Endothelial cell of umbilical vein (primary cell): ENCODE measurements at regions of chr12 and their contacts with region 1.

Region 1: DNA sequence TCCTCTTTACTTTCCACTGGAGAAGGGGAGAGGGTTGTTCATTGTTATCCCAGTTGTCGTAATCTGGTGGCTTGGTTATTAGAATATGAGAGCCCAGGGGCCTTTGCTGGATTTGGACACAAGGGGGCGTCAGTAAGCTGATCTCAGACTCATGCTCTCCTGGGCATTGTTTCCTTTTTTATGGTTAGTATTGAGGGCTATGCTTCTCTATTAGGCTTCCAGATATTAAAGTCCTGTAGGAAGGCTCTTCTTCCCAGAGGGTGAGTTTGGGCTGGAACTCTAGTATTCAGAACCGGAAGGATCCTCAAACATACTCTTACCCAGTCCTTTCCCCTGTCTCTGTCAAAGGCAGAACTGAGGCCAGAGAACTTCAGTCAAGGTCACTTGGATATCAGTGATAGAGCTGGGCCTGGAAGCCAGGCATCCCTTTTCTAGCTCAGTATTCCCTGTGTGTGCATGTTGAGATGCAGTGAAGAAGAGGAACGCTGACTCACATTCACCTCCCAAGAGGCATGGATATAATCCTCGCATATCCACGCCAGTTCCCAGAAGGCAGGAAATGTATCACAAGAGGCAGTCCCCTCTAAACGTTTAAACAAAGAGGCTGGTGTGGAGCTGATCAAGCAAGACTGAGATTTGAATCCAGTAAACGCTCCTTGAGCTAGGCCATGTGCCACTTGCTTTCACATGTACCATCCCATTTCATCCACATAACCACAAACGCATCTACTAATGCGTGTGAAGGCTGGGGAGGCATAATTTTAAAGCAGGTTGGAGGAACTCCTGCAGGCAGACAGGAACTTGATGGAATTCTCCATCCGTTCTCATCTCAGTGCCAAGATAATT is 41.6 kb downstream of the UBE3B start:
- DNase-seq: peak; percentile 84
- H3K4me3 ChIP-seq: peak overlapping the region in 1 of 3 experiments; percentile 20
- H3K27ac ChIP-seq: peak overlapping the region; percentile 98
- H3K4me1 ChIP-seq: peaks cover 27% of the 10 kb centered on the region
- H3K27me3 ChIP-seq: no peaks in the 10 kb centered on the region
- CTCF ChIP-seq: peak; percentile 84 to 86
- POLR2A ChIP-seq: no peak

Region 2: DNA sequence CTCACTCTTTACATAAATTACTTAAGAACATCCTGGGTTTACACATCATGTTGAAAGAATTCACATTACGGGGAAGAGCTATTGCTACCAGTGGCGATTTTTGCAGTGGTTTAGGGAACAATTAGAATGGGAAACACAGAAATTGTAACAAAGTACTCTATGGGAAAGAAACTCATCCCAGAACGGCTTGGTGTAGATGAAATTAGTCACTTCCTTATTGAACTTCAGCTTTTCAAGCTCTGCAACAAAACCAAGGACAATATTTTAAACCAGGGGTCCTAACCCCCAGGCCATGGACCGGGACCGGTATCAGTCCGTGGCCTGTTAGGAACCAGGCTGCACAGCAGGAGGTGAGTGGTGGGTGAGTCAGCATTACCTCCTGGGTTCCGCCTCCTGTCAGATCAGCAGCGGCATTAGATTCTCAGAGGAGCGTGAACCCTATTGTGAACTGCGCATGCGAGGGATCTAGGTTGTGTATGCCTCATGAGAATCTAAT is 1036.3 kb before region 1 on chr12:
- CTCF ChIA-PET with region 1: no interaction called
- POLR2A ChIA-PET with region 1: no interaction called
- dilution Hi-C with region 1: no loop called
- intact Hi-C with region 1: no loop called
- DNase-seq: no peak
- H3K4me3 ChIP-seq: no peak overlapping the region
- H3K27ac ChIP-seq: no peak overlapping the region
- H3K4me1 ChIP-seq: no peaks in the 10 kb centered on the region
- H3K27me3 ChIP-seq: no peaks in the 10 kb centered on the region
- CTCF ChIP-seq: no peak
- POLR2A ChIP-seq: no peak

Region 3: GRCh38 chr12:109462710-109463692 is 56.0 kb before region 1 on chr12:
- CTCF ChIA-PET with region 1: interaction called, 6 read pairs
- POLR2A ChIA-PET with region 1: no interaction called
- dilution Hi-C with region 1: no loop called
- intact Hi-C with region 1: loop called (anchors 2 kb)
- DNase-seq: peak; percentile 92
- H3K4me3 ChIP-seq: no peak overlapping the region
- H3K27ac ChIP-seq: peak overlapping the region; percentile 89
- H3K4me1 ChIP-seq: peaks cover 71% of the 10 kb centered on the region
- H3K27me3 ChIP-seq: no peaks in the 10 kb centered on the region
- CTCF ChIP-seq: no peak
- POLR2A ChIP-seq: peak; percentile 23

Region 4: DNA sequence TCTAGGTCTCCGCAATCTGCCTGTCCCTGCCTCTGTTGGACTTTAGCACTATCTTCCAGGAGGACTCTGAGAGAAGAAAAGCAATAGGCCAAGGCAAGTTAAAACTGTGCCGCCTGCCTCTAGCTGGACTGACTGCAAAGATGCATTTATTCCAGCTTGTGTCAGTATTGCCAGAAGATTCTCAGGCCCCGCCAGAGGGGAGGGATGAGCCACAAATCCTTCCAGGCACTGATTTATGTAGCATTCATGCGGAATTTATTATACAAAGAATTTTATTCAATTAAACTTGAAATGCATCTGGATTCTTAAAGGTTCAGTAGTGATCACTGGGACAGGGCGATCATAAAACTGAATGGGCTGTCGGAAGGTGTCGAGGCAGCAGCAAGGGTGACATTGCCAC is 34.4 kb after region 1 on chr12:
- CTCF ChIA-PET with region 1: interaction called, 17 read pairs
- POLR2A ChIA-PET with region 1: no interaction called
- dilution Hi-C with region 1: no loop called
- intact Hi-C with region 1: no loop called
- DNase-seq: no peak
- H3K4me3 ChIP-seq: no peak overlapping the region
- H3K27ac ChIP-seq: no peak overlapping the region
- H3K4me1 ChIP-seq: no peaks in the 10 kb centered on the region
- H3K27me3 ChIP-seq: peaks cover 0 to 2% of the 10 kb centered on the region in 2 experiments
- CTCF ChIP-seq: no peak
- POLR2A ChIP-seq: no peak

Region 5: GRCh38 chr12:109597795-109598427 is 78.9 kb after region 1 on chr12:
- CTCF ChIA-PET with region 1: interaction called, 33 read pairs
- POLR2A ChIA-PET with region 1: no interaction called
- dilution Hi-C with region 1: no loop called
- intact Hi-C with region 1: loop called (anchors 1 kb)
- DNase-seq: peak; percentile 78
- H3K4me3 ChIP-seq: no peak overlapping the region
- H3K27ac ChIP-seq: no peak overlapping the region
- H3K4me1 ChIP-seq: peaks cover 3% of the 10 kb centered on the region
- H3K27me3 ChIP-seq: no peaks in the 10 kb centered on the region
- CTCF ChIP-seq: peak; percentile 95 to 100
- POLR2A ChIP-seq: no peak

Region 6: DNA sequence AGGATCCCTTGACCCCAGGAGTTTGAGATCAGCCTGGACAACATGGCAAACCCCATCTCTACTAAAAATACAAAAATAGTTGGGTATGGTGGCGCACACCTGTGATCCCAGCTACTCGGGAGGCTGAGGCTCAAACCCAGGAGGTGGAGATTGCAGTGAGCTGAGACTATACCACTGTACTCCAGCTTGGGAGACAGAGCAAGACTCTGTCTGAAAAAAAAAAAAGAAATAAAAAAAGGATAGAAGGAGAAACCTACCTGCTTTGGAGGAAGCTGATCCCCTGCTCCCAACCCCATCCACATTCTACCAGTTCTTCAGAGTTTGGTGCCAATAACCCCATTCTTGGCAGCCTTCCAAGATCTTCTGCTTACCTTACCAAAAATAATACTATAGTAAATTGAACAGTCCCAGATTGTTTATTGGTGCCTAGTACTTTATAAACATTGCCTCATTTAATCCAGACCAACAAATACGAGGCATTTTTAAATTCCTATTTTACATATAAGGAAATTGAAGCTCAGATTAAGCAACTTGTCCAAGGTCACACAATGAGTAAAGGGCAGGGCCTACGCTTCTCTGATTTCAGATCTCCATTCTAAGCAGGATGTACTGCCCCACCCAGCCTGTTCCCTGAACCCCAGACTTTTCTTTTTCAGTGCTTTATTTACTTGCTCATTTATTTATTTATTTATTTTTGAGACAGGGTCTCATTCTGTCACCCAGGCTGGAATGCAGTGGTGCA is 161.4 kb after region 1 on chr12:
- CTCF ChIA-PET with region 1: no interaction called
- POLR2A ChIA-PET with region 1: no interaction called
- dilution Hi-C with region 1: no loop called
- intact Hi-C with region 1: no loop called
- DNase-seq: no peak
- H3K4me3 ChIP-seq: no peak overlapping the region
- H3K27ac ChIP-seq: no peak overlapping the region
- H3K4me1 ChIP-seq: no peaks in the 10 kb centered on the region
- H3K27me3 ChIP-seq: peaks cover 16 to 24% of the 10 kb centered on the region in 2 experiments
- CTCF ChIP-seq: no peak
- POLR2A ChIP-seq: no peak

Region 7: GRCh38 chr12:109713187-109713984 is 194.3 kb after region 1 on chr12 and contains the start of gene FAM222A:
- CTCF ChIA-PET with region 1: interaction called, 6 read pairs
- POLR2A ChIA-PET with region 1: no interaction called
- dilution Hi-C with region 1: no loop called
- intact Hi-C with region 1: loop called (anchors 1 kb)
- DNase-seq: peak; percentile 98
- H3K4me3 ChIP-seq: peak within 1 kb of the TSS; percentile 33 to 58 (median 33)
- H3K27ac ChIP-seq: no peak within 1 kb of the TSS
- H3K4me1 ChIP-seq: no peaks in the 10 kb centered on the region
- H3K27me3 ChIP-seq: peaks cover 23 to 28% of the 10 kb centered on the region in 2 experiments
- CTCF ChIP-seq: no peak
- POLR2A ChIP-seq: peak; percentile 81
- total RNA-seq, gene FAM222A: 0.69 and 1.7 TPM in 2 replicates

Region 8: DNA sequence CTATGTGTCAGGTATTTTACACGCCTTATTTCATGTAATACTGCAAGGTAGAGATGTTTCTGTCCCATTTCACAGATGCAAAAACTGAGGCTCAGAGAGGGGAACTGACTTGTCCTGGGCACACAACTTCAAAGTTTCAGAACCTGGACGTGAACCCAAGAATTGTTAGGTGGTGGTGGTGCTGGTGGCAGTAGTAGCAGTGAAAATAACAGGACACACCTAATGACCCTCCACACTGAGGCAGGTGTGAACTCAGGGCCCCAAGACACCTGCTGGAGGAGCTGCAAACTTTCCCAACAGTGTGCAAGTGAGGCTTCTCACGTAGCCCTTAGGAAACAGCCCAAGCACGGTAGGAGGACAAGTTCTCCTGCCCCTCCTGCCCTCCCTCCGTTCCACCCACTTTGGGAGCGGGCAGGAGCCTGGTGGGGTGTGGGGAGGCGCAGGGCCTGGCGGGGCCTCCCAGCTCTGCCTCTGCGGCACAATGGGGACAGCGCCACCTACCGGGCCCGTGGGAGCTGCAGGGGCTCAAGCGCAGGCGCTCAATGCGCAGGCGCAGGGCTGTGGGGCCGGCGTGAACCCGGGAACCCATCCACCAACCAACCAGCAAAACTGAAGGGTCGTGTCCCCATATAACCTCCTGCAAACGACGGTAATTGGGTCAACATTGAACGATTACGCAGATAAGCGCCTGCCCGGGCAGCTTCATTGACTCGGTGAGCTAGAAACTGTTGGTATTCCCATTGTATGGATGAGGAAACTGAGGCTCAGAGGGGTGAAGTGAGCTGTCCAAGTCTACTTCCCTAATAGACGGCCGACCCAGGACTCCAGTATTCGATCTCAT is 326.2 kb after region 1 on chr12:
- CTCF ChIA-PET with region 1: interaction called, 13 read pairs
- POLR2A ChIA-PET with region 1: no interaction called
- dilution Hi-C with region 1: no loop called
- intact Hi-C with region 1: loop called (anchors 1 kb)
- DNase-seq: peak; percentile 79
- H3K4me3 ChIP-seq: peak overlapping the region in 1 of 3 experiments; percentile 35
- H3K27ac ChIP-seq: no peak overlapping the region
- H3K4me1 ChIP-seq: peaks cover 5% of the 10 kb centered on the region
- H3K27me3 ChIP-seq: no peaks in the 10 kb centered on the region
- CTCF ChIP-seq: peak; percentile 99 to 100
- POLR2A ChIP-seq: no peak